Dorsolateral prefrontal cortex (tissue), 120 donors: ENCODE measurements at regions of chr11 and their contacts with region 1.

Region 1: GRCh38 chr11:125345421-125346178 is 150.5 kb downstream of the FEZ1 start:
- DNase-seq: peak in 9 of 10 donors; percentile 65 to 88 (median 78)
- H3K4me3 ChIP-seq: peak overlapping the region in 1 of 59 donors; percentile 4
- H3K27ac ChIP-seq: peak overlapping the region in 57 of 59 donors; percentile 43 to 95 (median 84)
- H3K27me3 ChIP-seq: no peaks in the 10 kb centered on the region
- CTCF ChIP-seq: peak; percentile 82 to 97 (median 89)

Region 2: GRCh38 chr11:124961972-124962609 is 383.5 kb before region 1 on chr11:
- intact Hi-C with region 1: loop called in 1 of 2 experiments (anchors 5 kb)
- DNase-seq: no peak
- H3K4me3 ChIP-seq: no peak overlapping the region
- H3K27ac ChIP-seq: no peak overlapping the region
- H3K27me3 ChIP-seq: no peaks in the 10 kb centered on the region
- CTCF ChIP-seq: peak; percentile 48 to 95 (median 78)

Region 3: GRCh38 chr11:125091247-125091876 is 254.2 kb before region 1 on chr11:
- intact Hi-C with region 1: loop called (anchors 5 to 10 kb)
- DNase-seq: peak in 3 of 10 donors; percentile 37 to 65 (median 50)
- H3K4me3 ChIP-seq: no peak overlapping the region
- H3K27ac ChIP-seq: peak overlapping the region in 6 of 59 donors; percentile 1 to 52 (median 17)
- H3K27me3 ChIP-seq: no peaks in the 10 kb centered on the region
- CTCF ChIP-seq: peak; percentile 48 to 86 (median 70)

Region 4: GRCh38 chr11:125263268-125263790 is 82.3 kb before region 1 on chr11:
- intact Hi-C with region 1: loop called in 1 of 2 experiments (anchors 5 kb)
- DNase-seq: peak; percentile 31 to 79 (median 72)
- H3K4me3 ChIP-seq: peak overlapping the region in 52 of 59 donors; percentile 1 to 59 (median 28)
- H3K27ac ChIP-seq: peak overlapping the region in 53 of 59 donors; percentile 16 to 82 (median 59)
- H3K27me3 ChIP-seq: no peaks in the 10 kb centered on the region
- CTCF ChIP-seq: no peak

Region 5: DNA sequence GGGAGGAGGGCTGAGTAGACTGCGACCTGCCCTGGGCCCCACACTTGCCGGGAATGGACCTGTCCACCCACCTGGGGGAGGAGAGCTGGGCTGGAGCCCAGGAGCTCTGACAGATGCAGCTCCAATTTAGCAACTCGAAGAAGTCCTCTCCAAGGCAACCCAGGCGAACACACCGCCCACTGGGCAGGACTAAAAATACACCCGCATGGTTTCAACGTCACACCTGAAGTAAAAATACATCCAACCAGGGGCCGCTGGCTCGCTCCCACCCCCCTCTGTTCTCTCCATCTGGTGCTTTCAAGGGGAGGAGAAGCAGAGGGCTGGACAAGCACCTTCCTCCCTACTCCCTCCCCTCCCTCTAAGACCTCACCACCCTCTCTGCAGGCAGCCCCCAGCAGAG is 30.5 kb after region 1 on chr11:
- intact Hi-C with region 1: no loop called
- DNase-seq: peak; percentile 32 to 95 (median 79)
- H3K4me3 ChIP-seq: no peak overlapping the region
- H3K27ac ChIP-seq: peak overlapping the region in 49 of 59 donors; percentile 15 to 88 (median 71)
- H3K27me3 ChIP-seq: no peaks in the 10 kb centered on the region
- CTCF ChIP-seq: no peak

Region 6: GRCh38 chr11:125481531-125481930 is 135.9 kb after region 1 on chr11:
- intact Hi-C with region 1: loop called in 1 of 2 experiments (anchors 10 kb)
- DNase-seq: peak; percentile 43 to 92 (median 86)
- H3K4me3 ChIP-seq: peak overlapping the region in 50 of 59 donors; percentile 4 to 62 (median 44)
- H3K27ac ChIP-seq: peak overlapping the region; percentile 76 to 100 (median 96)
- H3K27me3 ChIP-seq: no peaks in the 10 kb centered on the region
- CTCF ChIP-seq: peak in 12 of 56 donors; percentile 1 to 24 (median 18)